Activated B cell treated with CpG ODN at 0.5 μM for 24 hours (primary cell): ENCODE measurements at regions of chr17 and their contacts with region 1.

Region 1: DNA sequence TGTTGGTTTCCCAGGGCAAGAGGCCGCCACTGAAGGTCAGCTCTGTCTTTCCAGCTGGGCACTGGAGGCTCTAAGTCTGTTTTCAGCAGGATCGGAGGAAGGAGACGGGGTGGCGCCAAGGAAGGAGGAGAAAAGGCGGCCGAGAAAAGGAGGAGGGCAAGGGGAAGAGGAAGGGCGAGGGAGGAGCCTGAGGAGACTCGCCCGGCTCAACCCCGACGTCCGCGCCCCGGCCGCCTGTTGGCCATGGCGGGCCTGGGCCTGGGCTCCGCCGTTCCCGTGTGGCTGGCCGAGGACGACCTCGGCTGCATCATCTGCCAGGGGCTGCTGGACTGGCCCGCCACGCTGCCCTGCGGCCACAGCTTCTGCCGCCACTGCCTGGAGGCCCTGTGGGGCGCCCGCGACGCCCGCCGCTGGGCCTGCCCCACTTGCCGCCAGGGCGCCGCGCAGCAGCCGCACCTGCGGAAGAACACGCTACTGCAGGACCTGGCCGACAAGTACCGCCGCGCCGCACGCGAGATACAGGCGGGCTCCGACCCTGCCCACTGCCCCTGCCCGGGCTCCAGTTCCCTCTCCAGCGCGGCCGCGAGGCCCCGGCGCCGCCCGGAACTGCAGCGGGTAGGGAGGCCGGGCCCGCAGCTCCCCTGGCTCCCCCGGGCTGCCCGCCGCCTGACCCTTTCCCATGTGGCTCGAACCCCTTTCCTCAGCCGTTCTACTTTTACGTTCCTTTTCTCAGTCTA is at the start of gene RNF135:
- DNase-seq: peak; percentile 74
- ATAC-seq: peak; percentile 67
- H3K4me3 Mint-ChIP-seq: peak within 1 kb of the TSS; percentile 97
- H3K27ac Mint-ChIP-seq: peak within 1 kb of the TSS; percentile 98
- H3K4me1 Mint-ChIP-seq: peaks cover 65% of the 10 kb centered on the region
- H3K27me3 Mint-ChIP-seq: no peaks in the 10 kb centered on the region
- CTCF ChIP-seq: no peak
- total RNA-seq, gene RNF135: 16.7 and 18.5 TPM in 2 replicates

Region 2: GRCh38 chr17:30824356-30825145 is 146.4 kb before region 1 on chr17 and contains the start of gene CRLF3:
- CTCF ChIA-PET with region 1: no interaction called
- POLR2A ChIA-PET with region 1: interaction called, 10 read pairs
- intact Hi-C with region 1: no loop called
- DNase-seq: peak; percentile 89
- ATAC-seq: peak; percentile 93
- H3K4me3 Mint-ChIP-seq: peak within 1 kb of the TSS; percentile 93
- H3K27ac Mint-ChIP-seq: peak within 1 kb of the TSS; percentile 88
- H3K4me1 Mint-ChIP-seq: peaks cover 48% of the 10 kb centered on the region
- H3K27me3 Mint-ChIP-seq: no peaks in the 10 kb centered on the region
- CTCF ChIP-seq: no peak
- total RNA-seq, gene CRLF3: 53.5 and 54.9 TPM in 2 replicates

Region 3: GRCh38 chr17:30906101-30906911 is 64.7 kb before region 1 on chr17 and contains the start of gene TEFM:
- CTCF ChIA-PET with region 1: interaction called, 5 read pairs
- POLR2A ChIA-PET with region 1: interaction called, 29 read pairs
- intact Hi-C with region 1: loop called (anchors 1 kb)
- DNase-seq: peak; percentile 90
- ATAC-seq: peak; percentile 98
- H3K4me3 Mint-ChIP-seq: peak within 1 kb of the TSS; percentile 95
- H3K27ac Mint-ChIP-seq: peak within 1 kb of the TSS; percentile 93
- H3K4me1 Mint-ChIP-seq: peaks cover 42% of the 10 kb centered on the region
- H3K27me3 Mint-ChIP-seq: no peaks in the 10 kb centered on the region
- CTCF ChIP-seq: no peak
- total RNA-seq, gene TEFM: 23.0 and 25.2 TPM in 2 replicates

Region 4: GRCh38 chr17:30939051-30939689 is 31.8 kb before region 1 on chr17:
- CTCF ChIA-PET with region 1: interaction called, 3 read pairs
- POLR2A ChIA-PET with region 1: interaction called, 21 read pairs
- intact Hi-C with region 1: loop called (anchors 1 kb)
- DNase-seq: no peak
- ATAC-seq: peak; percentile 77
- H3K4me3 Mint-ChIP-seq: peak overlapping the region; percentile 64
- H3K27ac Mint-ChIP-seq: peak overlapping the region; percentile 86
- H3K4me1 Mint-ChIP-seq: peaks cover 13% of the 10 kb centered on the region
- H3K27me3 Mint-ChIP-seq: no peaks in the 10 kb centered on the region
- CTCF ChIP-seq: no peak

Region 5: GRCh38 chr17:31008374-31009041 is 37.5 kb after region 1 on chr17:
- CTCF ChIA-PET with region 1: no interaction called
- POLR2A ChIA-PET with region 1: interaction called, 19 read pairs
- intact Hi-C with region 1: loop called (anchors 2 kb)
- DNase-seq: peak; percentile 66
- ATAC-seq: peak; percentile 85
- H3K4me3 Mint-ChIP-seq: peak overlapping the region; percentile 91
- H3K27ac Mint-ChIP-seq: peak overlapping the region; percentile 85
- H3K4me1 Mint-ChIP-seq: peaks cover 24% of the 10 kb centered on the region
- H3K27me3 Mint-ChIP-seq: no peaks in the 10 kb centered on the region
- CTCF ChIP-seq: no peak

Region 6: GRCh38 chr17:31457391-31458234 is 486.6 kb after region 1 on chr17:
- CTCF ChIA-PET with region 1: no interaction called
- POLR2A ChIA-PET with region 1: no interaction called
- intact Hi-C with region 1: no loop called
- DNase-seq: no peak
- ATAC-seq: no peak
- H3K4me3 Mint-ChIP-seq: no peak overlapping the region
- H3K27ac Mint-ChIP-seq: no peak overlapping the region
- H3K4me1 Mint-ChIP-seq: no peaks in the 10 kb centered on the region
- H3K27me3 Mint-ChIP-seq: no peaks in the 10 kb centered on the region
- CTCF ChIP-seq: no peak